Spleen (tissue), 13 donors: ENCODE measurements at regions of chr6 and their contacts with region 1.

Region 1: GRCh38 chr6:27830212-27830599 is 82.0 kb downstream of the OR2B2 start:
- DNase-seq: no peak
- H3K4me3 ChIP-seq: peak overlapping the region; percentile 20 to 77 (median 42)
- H3K27ac ChIP-seq: peak overlapping the region; percentile 80 to 96 (median 91)
- H3K4me1 ChIP-seq: peaks cover 7 to 64% (median 36%) of the 10 kb centered on the region in 6 donors
- H3K27me3 ChIP-seq: no peaks in the 10 kb centered on the region
- CTCF ChIP-seq: no peak
- POLR2A ChIP-seq: no peak

Region 2: GRCh38 chr6:27864906-27865849 is 35.0 kb after region 1 on chr6:
- intact Hi-C with region 1: loop called (anchors 5 kb)
- DNase-seq: peak; percentile 95
- H3K4me3 ChIP-seq: peak overlapping the region; percentile 43 to 75 (median 52)
- H3K27ac ChIP-seq: peak overlapping the region; percentile 71 to 92 (median 89)
- H3K4me1 ChIP-seq: peaks cover 7 to 40% (median 31%) of the 10 kb centered on the region in 6 donors
- H3K27me3 ChIP-seq: peaks cover 0 to 8% (median 0%) of the 10 kb centered on the region in 7 donors
- CTCF ChIP-seq: peak in 1 of 11 experiments; percentile 12
- POLR2A ChIP-seq: peak; percentile 69 to 94 (median 88)